Breast epithelium (tissue), 4 donors: ENCODE measurements at regions of chr1 and their contacts with region 1.

Region 1: GRCh38 chr1:9573723-9574122 is 15.0 kb upstream of the TMEM201 start:
- DNase-seq: no peak
- H3K4me3 ChIP-seq: no peak overlapping the region
- H3K27ac ChIP-seq: no peak overlapping the region
- H3K4me1 ChIP-seq: no peaks in the 10 kb centered on the region
- H3K27me3 ChIP-seq: no peaks in the 10 kb centered on the region
- CTCF ChIP-seq: peak in 2 of 3 donors; percentile 40 to 48
- POLR2A ChIP-seq: no peak

Region 2: DNA sequence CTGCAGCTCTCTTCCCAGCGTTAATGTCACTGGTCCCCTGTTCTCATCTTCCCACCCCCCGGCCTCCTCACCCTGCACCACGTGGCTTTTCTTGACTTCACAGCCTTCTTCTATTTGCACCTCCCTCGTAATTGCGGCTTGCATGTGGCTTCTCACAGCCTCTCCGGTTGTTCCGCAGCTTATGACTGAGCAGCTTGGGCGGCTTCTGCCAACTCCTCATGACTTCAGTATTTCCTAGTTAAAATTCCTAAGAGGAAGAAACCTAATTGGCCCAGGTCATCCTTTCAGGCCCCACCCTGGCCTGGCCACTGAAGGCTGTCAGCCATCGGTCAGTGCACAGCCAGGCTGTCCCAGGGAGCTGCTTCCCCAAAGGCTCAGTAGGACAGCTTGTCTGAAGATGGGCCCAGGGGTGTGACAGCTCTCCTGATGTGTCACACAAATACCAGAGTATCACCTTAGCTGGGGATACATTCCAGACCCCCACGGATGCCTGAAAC is 747.7 kb before region 1 on chr1:
- intact Hi-C with region 1: loop called (anchors 5 kb)
- DNase-seq: no peak
- H3K4me3 ChIP-seq: no peak overlapping the region
- H3K27ac ChIP-seq: no peak overlapping the region
- H3K4me1 ChIP-seq: no peaks in the 10 kb centered on the region
- H3K27me3 ChIP-seq: no peaks in the 10 kb centered on the region
- CTCF ChIP-seq: no peak
- POLR2A ChIP-seq: no peak

Region 3: GRCh38 chr1:9553736-9554144 is 20.0 kb before region 1 on chr1:
- intact Hi-C with region 1: no loop called
- DNase-seq: no peak
- H3K4me3 ChIP-seq: no peak overlapping the region
- H3K27ac ChIP-seq: no peak overlapping the region
- H3K4me1 ChIP-seq: no peaks in the 10 kb centered on the region
- H3K27me3 ChIP-seq: no peaks in the 10 kb centered on the region
- CTCF ChIP-seq: no peak
- POLR2A ChIP-seq: no peak

Region 4: DNA sequence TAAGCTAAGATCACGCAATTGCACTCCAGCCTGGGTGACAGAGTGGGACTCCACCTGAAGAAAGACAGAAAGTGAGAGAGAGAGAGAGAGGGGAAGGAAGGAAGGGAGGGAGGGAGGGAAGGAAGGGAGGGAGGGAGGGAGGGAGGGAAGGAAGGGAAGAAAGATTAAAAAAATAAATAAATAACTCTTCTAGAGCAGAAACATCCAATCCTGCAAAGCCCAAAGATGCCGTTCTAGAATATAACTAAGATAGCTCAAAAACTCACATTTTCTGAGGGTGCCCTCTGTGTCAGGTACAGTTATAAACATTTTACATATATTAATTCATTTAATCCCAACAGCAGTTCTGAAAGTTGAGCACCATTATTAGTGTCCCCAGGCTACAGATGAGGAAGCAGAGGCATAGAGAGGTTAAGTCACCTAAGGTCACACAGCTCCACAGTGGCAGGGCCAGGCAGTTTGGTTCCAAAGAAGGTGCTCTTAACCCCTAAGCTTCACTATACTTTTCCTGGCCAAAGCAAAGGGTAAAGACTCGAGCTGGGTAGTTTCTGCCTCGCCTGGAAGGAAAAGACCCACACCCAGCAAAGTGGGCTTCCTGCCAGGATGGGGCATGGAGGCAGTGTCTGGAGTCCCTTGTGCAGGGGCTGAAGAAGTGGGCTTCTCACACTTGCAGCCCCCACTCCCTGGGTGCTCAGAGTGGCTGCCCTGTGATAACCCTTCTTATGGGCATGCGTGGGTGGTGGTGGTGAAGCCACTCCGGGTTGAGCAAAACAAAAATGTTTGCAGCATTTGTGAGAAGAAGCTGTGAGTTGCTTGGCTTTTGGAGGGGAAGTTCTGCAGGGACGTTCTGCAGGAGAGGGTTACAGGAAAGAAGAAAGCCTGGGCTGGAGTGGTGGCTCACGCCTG is 69.9 kb after region 1 on chr1:
- intact Hi-C with region 1: no loop called
- DNase-seq: no peak
- H3K4me3 ChIP-seq: no peak overlapping the region
- H3K27ac ChIP-seq: no peak overlapping the region
- H3K4me1 ChIP-seq: no peaks in the 10 kb centered on the region
- H3K27me3 ChIP-seq: no peaks in the 10 kb centered on the region
- CTCF ChIP-seq: no peak
- POLR2A ChIP-seq: no peak

Region 5: GRCh38 chr1:9700340-9700739 is 126.6 kb after region 1 on chr1:
- intact Hi-C with region 1: no loop called
- DNase-seq: no peak
- H3K4me3 ChIP-seq: no peak overlapping the region
- H3K27ac ChIP-seq: no peak overlapping the region
- H3K4me1 ChIP-seq: no peaks in the 10 kb centered on the region
- H3K27me3 ChIP-seq: no peaks in the 10 kb centered on the region
- CTCF ChIP-seq: no peak
- POLR2A ChIP-seq: no peak